ENCODE measurements at regions of chr16 and their contacts with region 1.

Region 1: DNA sequence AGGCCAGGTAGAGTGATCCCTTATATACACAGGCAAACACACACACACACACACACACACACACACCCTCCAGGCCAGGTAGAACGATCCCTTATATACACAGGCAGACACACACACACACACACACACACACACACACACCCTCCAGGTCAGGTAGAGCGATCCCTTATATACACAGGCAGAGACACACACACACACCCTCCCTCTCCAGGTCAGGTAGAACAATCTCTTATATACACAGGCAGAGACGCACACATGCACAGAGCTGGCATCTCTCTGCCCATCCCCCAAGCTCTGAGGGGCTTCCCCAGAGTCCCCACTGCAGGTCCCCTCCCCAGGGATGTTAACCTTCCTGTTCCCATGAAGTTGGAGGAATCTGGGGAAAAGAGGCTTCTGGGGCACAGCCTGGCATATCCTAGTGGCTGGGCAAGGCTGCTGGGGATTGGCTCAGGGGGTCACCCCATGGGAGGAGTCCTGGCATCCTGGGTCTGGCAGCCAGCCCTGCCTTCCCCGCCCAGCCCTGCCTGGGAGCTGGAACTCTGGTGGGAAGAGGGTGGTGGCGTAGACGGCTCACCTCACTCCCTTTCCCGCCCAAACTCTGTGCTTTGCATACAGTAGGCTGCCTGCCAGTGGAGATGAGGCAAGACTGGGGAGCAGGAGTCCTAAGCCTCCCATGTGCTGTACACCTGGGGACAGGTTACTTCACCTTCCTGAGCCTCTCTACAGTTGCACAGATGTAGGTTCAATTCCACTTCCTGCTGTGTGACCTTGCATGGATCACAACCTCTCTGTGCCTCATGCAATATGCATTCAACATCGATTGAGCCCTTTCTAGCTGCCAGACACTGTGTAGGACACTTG is 41.8 kb downstream of the TEKT5 start:
- DNase-seq: peak; percentile 89
- H3K4me3 ChIP-seq: peak overlapping the region; percentile 6 to 41 (median 30)
- H3K27ac ChIP-seq: peak overlapping the region; percentile 65
- H3K4me1 ChIP-seq: peaks cover 16% of the 10 kb centered on the region
- H3K27me3 ChIP-seq: no peaks in the 10 kb centered on the region
- CTCF ChIP-seq: no peak

Region 2: GRCh38 chr16:10944249-10945064 is 291.5 kb after region 1 on chr16 and contains the start of gene CLEC16A:
- CTCF ChIA-PET with region 1: no interaction called
- dilution Hi-C with region 1: loop called (anchors 5 kb)
- in situ Hi-C with region 1: no loop called
- intact Hi-C with region 1: no loop called
- DNase-seq: peak; percentile 95
- H3K4me3 ChIP-seq: peak within 1 kb of the TSS; percentile 82 to 92 (median 89)
- H3K27ac ChIP-seq: peak within 1 kb of the TSS; percentile 54
- H3K4me1 ChIP-seq: peaks cover 61% of the 10 kb centered on the region
- H3K27me3 ChIP-seq: no peaks in the 10 kb centered on the region
- CTCF ChIP-seq: no peak
- total RNA-seq, gene CLEC16A: 36.4 to 46.3 TPM

Measured in mammary epithelial cell (primary cell).